ENCODE measurements at regions of chr7 and their contacts with region 1.

Region 1: DNA sequence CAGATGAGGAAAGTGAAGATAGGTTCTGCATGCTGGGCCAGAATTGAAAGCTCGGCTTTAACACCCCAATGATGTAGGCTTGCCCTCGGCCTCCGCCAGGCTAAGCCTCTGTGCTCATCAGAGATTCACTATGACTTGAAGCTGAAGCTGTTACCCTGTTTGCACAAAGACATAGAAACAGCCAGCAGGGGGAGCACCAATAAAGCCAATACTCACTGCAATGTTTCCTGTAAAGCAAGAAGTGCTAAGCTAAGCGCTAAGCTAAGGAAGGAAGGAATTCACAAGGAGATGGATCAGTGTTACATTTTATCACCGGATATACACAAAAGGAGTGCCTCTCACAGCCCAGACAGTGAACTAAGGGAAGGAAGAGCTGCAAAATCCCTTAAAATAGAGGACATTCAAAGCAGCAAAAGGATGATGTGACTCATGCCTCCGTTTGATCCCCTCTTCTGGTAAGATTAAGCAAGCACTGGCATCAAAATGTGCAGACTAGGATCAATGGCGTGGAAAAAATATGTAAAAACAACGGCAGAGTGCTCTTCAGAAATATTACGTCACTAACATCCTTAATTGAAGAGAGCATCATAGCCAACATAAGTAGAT is 153.8 kb downstream of the COBL start:
- DNase-seq: peak; percentile 85
- ATAC-seq: peak; percentile 96
- H3K4me3 ChIP-seq: 0 out of 4 replicates have a peak overlapping the region, but pooled peaks of 1 of the 2 experiments have one; percentile 10
- H3K27ac ChIP-seq: no peak overlapping the region
- H3K4me1 ChIP-seq: peaks cover 0 to 9% of the 10 kb centered on the region in 2 experiments; a peak in 2 of 4 replicates
- H3K27me3 ChIP-seq: no peaks in the 10 kb centered on the region
- CTCF ChIP-seq: peak; percentile 83 to 93 (median 93)
- POLR2A ChIP-seq: no peak
- RAD21 ChIP-seq: peak; percentile 93

Region 2: GRCh38 chr7:50022991-50023390 is 1139.8 kb before region 1 on chr7:
- CTCF ChIA-PET with region 1: no interaction called
- POLR2A ChIA-PET with region 1: no interaction called
- RAD21 ChIA-PET with region 1: no interaction called
- intact Hi-C with region 1: no loop called
- DNase-seq: no peak
- ATAC-seq: no peak
- H3K4me3 ChIP-seq: no peak overlapping the region
- H3K27ac ChIP-seq: no peak overlapping the region
- H3K4me1 ChIP-seq: no peaks in the 10 kb centered on the region
- H3K27me3 ChIP-seq: no peaks in the 10 kb centered on the region
- CTCF ChIP-seq: no peak
- POLR2A ChIP-seq: no peak
- RAD21 ChIP-seq: no peak

Region 3: GRCh38 chr7:50206453-50207250 is 956.2 kb before region 1 on chr7:
- CTCF ChIA-PET with region 1: interaction called, 14 read pairs
- POLR2A ChIA-PET with region 1: no interaction called
- RAD21 ChIA-PET with region 1: interaction called in 1 of 2 experiments, 4 read pairs
- intact Hi-C with region 1: loop called (anchors 5 kb)
- DNase-seq: peak; percentile 38
- ATAC-seq: peak; percentile 76
- H3K4me3 ChIP-seq: peak overlapping the region in 1 of 2 experiments; percentile 43; a peak in 2 of 4 replicates
- H3K27ac ChIP-seq: no peak overlapping the region; the same call in 1 of the 2 replicates
- H3K4me1 ChIP-seq: peaks cover 18 to 38% of the 10 kb centered on the region in 2 experiments; a peak in 3 of 4 replicates
- H3K27me3 ChIP-seq: no peaks in the 10 kb centered on the region
- CTCF ChIP-seq: no peak
- POLR2A ChIP-seq: no peak
- RAD21 ChIP-seq: no peak

Region 4: DNA sequence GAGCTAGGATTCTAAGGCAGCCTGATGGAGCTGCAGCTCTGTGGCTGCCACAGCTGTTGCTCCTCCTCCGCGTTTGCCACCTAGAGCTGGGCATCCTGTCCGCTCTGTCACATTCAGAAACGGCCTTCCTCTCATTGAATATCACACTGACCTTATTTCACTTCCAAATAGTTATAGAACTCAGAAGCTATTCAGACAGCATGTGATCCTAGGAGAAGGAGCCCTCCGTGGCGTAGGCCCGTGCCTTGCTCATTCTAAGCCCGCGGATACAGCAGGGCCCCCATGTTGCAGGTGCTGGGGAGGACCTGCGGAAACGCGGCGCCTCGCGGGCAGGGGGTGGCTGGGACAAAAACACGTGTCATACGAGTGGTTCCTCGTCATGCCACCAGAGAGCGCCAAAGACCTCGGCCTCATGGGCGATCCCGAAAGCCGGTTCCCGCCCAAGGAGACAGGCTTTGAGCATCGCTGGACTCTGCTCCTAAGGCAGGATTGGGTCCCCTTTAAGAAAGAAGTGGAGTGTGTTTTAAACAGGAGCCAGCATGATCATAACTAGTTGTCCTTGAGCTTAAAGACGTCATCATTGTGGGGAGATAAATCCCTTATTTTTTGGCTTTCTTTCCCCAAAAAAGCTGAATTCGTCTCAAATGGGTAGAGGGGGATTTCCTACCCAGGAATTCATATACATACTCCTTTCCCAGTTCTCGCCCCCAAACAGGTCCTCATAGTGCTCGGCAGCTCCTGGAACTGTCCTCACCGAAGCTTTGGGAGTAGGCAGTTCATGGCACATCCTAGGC is 694.8 kb before region 1 on chr7:
- CTCF ChIA-PET with region 1: interaction called, 22 read pairs
- POLR2A ChIA-PET with region 1: interaction called, 3 read pairs
- RAD21 ChIA-PET with region 1: interaction called, 4 to 8 read pairs
- intact Hi-C with region 1: loop called (anchors 2 kb)
- DNase-seq: peak; percentile 52
- ATAC-seq: peak; percentile 93
- H3K4me3 ChIP-seq: no peak overlapping the region
- H3K27ac ChIP-seq: no peak overlapping the region
- H3K4me1 ChIP-seq: peaks cover 2 to 5% of the 10 kb centered on the region in 2 experiments; a peak in 3 of 4 replicates
- H3K27me3 ChIP-seq: no peaks in the 10 kb centered on the region
- CTCF ChIP-seq: peak; percentile 78 to 85 (median 82)
- POLR2A ChIP-seq: no peak
- RAD21 ChIP-seq: peak; percentile 97

Region 5: DNA sequence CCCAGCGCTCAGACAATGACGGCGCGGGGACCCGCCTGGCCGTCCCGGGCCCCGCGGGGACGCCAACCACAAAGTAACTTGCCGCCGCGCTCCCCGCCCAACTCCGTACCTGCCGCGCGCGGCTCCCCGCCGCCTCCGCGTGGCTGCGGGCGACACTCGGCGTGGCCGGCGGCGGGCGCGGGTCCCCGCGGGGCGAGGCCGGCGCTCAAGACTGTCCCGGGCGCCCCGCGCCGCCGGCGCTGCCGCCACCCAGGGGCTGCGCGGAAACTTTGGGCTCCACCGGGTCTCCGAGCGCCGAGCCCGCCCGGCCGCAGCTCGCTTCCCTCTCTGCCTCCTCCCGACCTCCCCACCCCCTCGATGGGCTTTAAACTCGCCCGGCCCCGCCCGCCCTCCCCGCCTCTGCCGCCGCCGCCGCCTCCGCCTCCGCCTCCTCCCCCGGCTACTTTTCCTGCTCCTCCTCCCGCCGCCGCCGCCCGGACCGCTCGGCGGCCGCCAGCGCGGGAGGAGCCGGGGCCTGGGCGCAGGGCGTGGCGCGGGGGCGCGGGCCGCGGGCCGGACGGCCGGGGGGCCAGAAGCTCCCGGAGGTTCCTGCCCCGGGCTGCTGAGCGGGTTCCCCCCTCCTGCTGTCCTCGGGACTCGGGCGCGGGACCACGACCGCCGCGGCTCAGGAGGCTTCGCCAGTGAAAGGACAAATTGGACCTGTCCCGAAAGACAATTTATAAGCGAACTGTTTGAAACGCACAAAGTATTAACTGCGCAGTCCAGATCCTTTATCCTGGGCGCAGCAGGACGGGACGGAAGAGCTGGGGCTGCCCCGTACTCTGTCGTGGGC is 369.5 kb before region 1 on chr7:
- CTCF ChIA-PET with region 1: interaction called, 3 read pairs
- POLR2A ChIA-PET with region 1: no interaction called
- RAD21 ChIA-PET with region 1: no interaction called
- intact Hi-C with region 1: loop called (anchors 10 kb)
- DNase-seq: no peak
- ATAC-seq: peak; percentile 72
- H3K4me3 ChIP-seq: peak overlapping the region; percentile 56 to 61
- H3K27ac ChIP-seq: peak overlapping the region; percentile 81; the same call in 1 of the 2 replicates
- H3K4me1 ChIP-seq: peaks cover 11 to 13% of the 10 kb centered on the region in 2 experiments; a peak in 3 of 4 replicates
- H3K27me3 ChIP-seq: peaks cover 8% of the 10 kb centered on the region; the same call in 1 of the 2 replicates
- CTCF ChIP-seq: no peak
- POLR2A ChIP-seq: peak; percentile 36
- RAD21 ChIP-seq: no peak

Region 6: GRCh38 chr7:51224811-51225612 is 62.2 kb after region 1 on chr7:
- CTCF ChIA-PET with region 1: interaction called, 19 read pairs
- POLR2A ChIA-PET with region 1: no interaction called
- RAD21 ChIA-PET with region 1: interaction called in 1 of 2 experiments, 5 read pairs
- intact Hi-C with region 1: no loop called
- DNase-seq: peak; percentile 45
- ATAC-seq: peak; percentile 98
- H3K4me3 ChIP-seq: no peak overlapping the region
- H3K27ac ChIP-seq: no peak overlapping the region
- H3K4me1 ChIP-seq: peaks cover 7 to 25% of the 10 kb centered on the region in 2 experiments; a peak in 3 of 4 replicates
- H3K27me3 ChIP-seq: no peaks in the 10 kb centered on the region
- CTCF ChIP-seq: peak; percentile 66 to 78 (median 68); a peak in 5 of 6 replicates
- POLR2A ChIP-seq: no peak
- RAD21 ChIP-seq: peak; percentile 84

Region 7: DNA sequence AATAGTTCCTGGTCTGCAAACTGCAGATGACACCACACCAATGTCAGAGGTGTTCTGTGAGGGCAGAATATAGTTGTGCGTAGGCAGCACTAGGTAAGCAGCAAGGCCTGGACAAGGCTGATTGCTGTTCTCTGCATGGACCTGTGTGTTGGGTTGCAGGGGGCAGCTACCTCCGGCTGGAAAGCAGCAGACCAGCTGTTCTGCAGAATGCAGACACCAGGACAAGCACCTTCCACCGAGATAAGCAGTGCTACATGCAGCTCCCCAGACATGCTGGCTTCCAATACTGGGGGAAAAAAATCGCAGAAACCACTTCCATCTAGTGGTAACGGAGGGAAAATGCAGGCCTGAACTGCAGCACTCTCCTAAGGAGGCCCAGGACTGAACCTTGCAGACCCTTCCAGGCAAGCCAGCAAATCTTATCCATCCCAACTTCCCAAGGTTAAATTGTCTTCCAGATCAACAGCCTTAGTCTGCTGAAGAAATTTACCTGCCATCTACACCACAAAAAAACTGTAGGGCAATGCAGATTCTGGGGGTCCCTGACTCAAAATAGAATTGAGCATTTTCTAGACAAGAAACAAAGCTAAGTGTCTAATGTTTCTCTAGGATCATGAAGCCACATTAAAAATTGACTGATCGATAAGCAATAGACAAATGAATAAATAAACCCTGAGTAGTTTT is 204.2 kb after region 1 on chr7:
- CTCF ChIA-PET with region 1: interaction called, 136 read pairs
- POLR2A ChIA-PET with region 1: interaction called, 6 read pairs
- RAD21 ChIA-PET with region 1: interaction called, 10 to 14 read pairs
- intact Hi-C with region 1: loop called (anchors 1 kb)
- DNase-seq: no peak
- ATAC-seq: peak; percentile 94
- H3K4me3 ChIP-seq: no peak overlapping the region
- H3K27ac ChIP-seq: no peak overlapping the region
- H3K4me1 ChIP-seq: peaks cover 0 to 8% of the 10 kb centered on the region in 2 experiments; a peak in 1 of 4 replicates
- H3K27me3 ChIP-seq: no peaks in the 10 kb centered on the region
- CTCF ChIP-seq: peak; percentile 65 to 85 (median 76); a peak in 5 of 6 replicates
- POLR2A ChIP-seq: no peak
- RAD21 ChIP-seq: peak; percentile 79

Region 8: GRCh38 chr7:51430480-51431086 is 267.8 kb after region 1 on chr7:
- CTCF ChIA-PET with region 1: interaction called, 107 read pairs
- POLR2A ChIA-PET with region 1: no interaction called
- RAD21 ChIA-PET with region 1: interaction called in 1 of 2 experiments, 4 read pairs
- intact Hi-C with region 1: loop called (anchors 1 kb)
- DNase-seq: peak; percentile 34
- ATAC-seq: peak; percentile 70
- H3K4me3 ChIP-seq: no peak overlapping the region
- H3K27ac ChIP-seq: no peak overlapping the region
- H3K4me1 ChIP-seq: no peaks in the 10 kb centered on the region
- H3K27me3 ChIP-seq: no peaks in the 10 kb centered on the region
- CTCF ChIP-seq: peak; percentile 39 to 88 (median 64); a peak in 5 of 6 replicates
- POLR2A ChIP-seq: no peak
- RAD21 ChIP-seq: peak; percentile 85